ENCODE measurements at regions of chr12 and their contacts with region 1.

Region 1: GRCh38 chr12:5988659-5989116 is 43.6 kb upstream of the ANO2 start:
- DNase-seq: peak; percentile 50 to 86
- H3K4me3 ChIP-seq: no peak overlapping the region
- H3K27ac ChIP-seq: no peak overlapping the region
- H3K4me1 ChIP-seq: no peaks in the 10 kb centered on the region
- H3K27me3 ChIP-seq: peaks cover 35% of the 10 kb centered on the region
- CTCF ChIP-seq: peak; percentile 99

Region 2: GRCh38 chr12:6020926-6021325 is 32.2 kb after region 1 on chr12:
- CTCF ChIA-PET with region 1: no interaction called
- POLR2A ChIA-PET with region 1: no interaction called
- intact Hi-C with region 1: no loop called
- DNase-seq: no peak
- H3K4me3 ChIP-seq: no peak overlapping the region
- H3K27ac ChIP-seq: no peak overlapping the region
- H3K4me1 ChIP-seq: peaks cover 8% of the 10 kb centered on the region
- H3K27me3 ChIP-seq: 0 out of 2 replicates have a peak, but pooled peaks cover 3% of the 10 kb centered on the region
- CTCF ChIP-seq: no peak

Region 3: GRCh38 chr12:6039894-6040568 is 51.3 kb after region 1 on chr12:
- CTCF ChIA-PET with region 1: interaction called, 82 read pairs
- POLR2A ChIA-PET with region 1: interaction called, 3 read pairs
- intact Hi-C with region 1: loop called (anchors 1 kb)
- DNase-seq: peak; percentile 44 to 65
- H3K4me3 ChIP-seq: no peak overlapping the region
- H3K27ac ChIP-seq: no peak overlapping the region
- H3K4me1 ChIP-seq: peaks cover 11% of the 10 kb centered on the region
- H3K27me3 ChIP-seq: no peaks in the 10 kb centered on the region
- CTCF ChIP-seq: peak; percentile 98

Region 4: GRCh38 chr12:6135071-6135470 is 146.4 kb after region 1 on chr12:
- CTCF ChIA-PET with region 1: no interaction called
- POLR2A ChIA-PET with region 1: interaction called, 29 read pairs
- intact Hi-C with region 1: no loop called
- DNase-seq: no peak
- H3K4me3 ChIP-seq: no peak overlapping the region
- H3K27ac ChIP-seq: no peak overlapping the region
- H3K4me1 ChIP-seq: no peaks in the 10 kb centered on the region
- H3K27me3 ChIP-seq: no peaks in the 10 kb centered on the region
- CTCF ChIP-seq: no peak

Region 5: DNA sequence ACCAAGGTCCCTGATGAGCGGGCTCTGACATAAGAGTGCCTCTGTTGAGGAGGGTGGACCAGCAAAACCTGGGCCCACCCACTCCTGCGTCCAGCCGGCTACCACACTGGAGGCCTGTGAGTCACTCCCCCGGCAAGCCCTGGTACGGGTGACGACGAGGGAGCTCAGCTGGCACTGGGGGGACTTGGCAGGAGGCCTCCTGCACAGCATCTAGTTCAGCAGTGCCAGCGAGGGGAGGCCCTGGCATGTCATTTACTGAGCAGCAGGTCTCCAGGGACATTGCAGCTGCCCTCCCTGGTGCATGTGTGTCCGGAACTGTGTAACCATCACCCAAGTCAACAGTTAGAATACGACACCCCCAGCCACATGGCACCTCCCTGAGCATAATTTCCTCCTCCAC is 235.9 kb after region 1 on chr12:
- CTCF ChIA-PET with region 1: interaction called, 11 read pairs
- POLR2A ChIA-PET with region 1: no interaction called
- intact Hi-C with region 1: no loop called
- DNase-seq: peak in 1 of 2 experiments; percentile 42
- H3K4me3 ChIP-seq: no peak overlapping the region
- H3K27ac ChIP-seq: no peak overlapping the region
- H3K4me1 ChIP-seq: peaks cover 88% of the 10 kb centered on the region
- H3K27me3 ChIP-seq: no peaks in the 10 kb centered on the region
- CTCF ChIP-seq: no peak

Region 6: DNA sequence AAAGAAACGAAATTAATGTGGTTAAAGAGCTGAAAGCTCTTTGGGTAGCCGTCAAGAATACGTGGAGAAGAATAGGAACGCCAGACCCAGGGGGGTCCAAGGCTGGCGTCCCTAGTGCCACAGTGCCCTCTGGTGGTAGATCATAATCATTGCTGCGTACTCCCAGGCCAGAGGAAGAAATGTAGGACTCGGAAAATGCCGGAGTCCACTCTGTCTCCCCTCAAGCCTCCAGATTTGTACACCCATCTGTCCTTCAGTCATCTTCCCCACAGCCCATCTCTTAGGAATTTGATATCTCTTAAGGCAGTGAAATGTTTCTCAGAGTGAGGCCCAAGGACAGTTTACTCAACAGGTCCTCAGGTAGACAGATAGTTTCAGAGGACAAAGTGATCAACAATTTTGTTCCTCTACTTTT is 296.4 kb after region 1 on chr12:
- CTCF ChIA-PET with region 1: interaction called, 12 read pairs
- POLR2A ChIA-PET with region 1: no interaction called
- intact Hi-C with region 1: loop called (anchors 1 kb)
- DNase-seq: peak; percentile 48 to 79
- H3K4me3 ChIP-seq: no peak overlapping the region
- H3K27ac ChIP-seq: no peak overlapping the region
- H3K4me1 ChIP-seq: peaks cover 40% of the 10 kb centered on the region
- H3K27me3 ChIP-seq: no peaks in the 10 kb centered on the region
- CTCF ChIP-seq: peak; percentile 99

Region 7: DNA sequence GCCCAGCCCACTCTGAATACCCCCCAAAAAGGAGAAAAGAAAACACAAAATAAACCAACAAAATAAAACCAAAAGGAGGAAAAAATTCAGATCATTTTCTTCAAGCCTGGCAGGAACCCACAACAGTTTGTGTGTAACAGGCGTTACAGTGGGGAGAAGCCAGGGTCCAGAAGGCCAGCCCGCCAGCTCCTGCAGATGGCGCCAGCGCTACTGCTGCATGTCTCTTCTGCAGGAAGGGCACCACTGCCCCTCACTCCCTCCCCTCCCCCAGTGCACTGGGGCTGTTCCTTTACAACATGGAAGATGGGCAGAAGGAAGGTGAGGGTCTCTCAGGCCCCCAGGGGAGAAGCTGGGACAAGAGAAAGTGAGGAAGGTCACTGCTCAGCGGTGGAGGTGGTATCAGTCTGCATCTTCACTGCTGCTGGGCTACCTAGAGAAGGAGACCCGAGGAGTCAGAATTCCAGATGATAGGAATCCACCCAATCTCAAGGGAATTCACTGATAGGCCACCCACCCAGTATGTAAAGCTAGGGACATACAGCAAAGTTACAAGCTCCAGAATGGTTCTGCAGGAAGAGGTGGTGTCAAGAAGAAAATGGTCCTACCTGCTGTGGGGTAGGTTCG is 581.7 kb after region 1 on chr12:
- CTCF ChIA-PET with region 1: interaction called, 5 read pairs
- POLR2A ChIA-PET with region 1: no interaction called
- intact Hi-C with region 1: loop called (anchors 5 kb)
- DNase-seq: peak; percentile 35 to 62
- H3K4me3 ChIP-seq: no peak overlapping the region
- H3K27ac ChIP-seq: no peak overlapping the region
- H3K4me1 ChIP-seq: peaks cover 16% of the 10 kb centered on the region
- H3K27me3 ChIP-seq: no peaks in the 10 kb centered on the region
- CTCF ChIP-seq: peak; percentile 58; the same call in 1 of the 2 replicates

Region 8: DNA sequence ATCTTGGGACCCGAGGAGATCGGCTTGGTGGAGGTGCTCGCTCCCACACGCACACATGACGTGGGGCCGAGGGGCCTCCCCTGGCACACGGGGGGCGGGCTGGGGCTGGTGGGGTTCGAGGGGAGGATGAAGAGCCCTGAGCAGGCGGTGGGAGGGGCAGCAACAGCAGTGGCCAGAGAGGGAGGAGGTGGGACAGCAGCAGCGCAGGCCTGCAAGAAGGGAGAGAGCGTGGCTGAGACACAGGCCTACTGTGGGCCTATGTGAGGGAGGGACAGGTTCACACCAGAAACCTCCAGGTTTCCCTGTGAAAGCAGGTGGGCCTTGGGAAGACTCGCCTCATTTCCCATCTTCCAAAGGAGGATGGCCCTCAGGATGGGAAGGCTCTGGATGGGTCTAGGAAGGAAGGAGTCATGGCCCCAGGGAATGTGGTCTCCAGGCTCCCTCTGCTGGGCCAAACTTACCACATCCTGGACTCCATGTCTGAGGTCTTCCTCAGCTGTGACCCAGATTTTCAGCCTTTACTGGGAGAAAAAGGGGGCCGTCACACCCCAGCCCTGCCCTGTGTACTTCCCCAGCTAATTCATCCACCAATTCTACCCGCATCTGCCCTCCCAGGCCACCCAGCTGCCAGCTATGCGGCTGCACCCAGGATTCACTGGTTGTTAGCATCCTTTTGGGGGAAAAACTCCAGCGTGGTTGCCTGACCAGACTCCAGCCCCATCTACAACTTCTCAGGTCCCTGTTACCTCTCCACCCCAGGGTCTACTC is 709.1 kb after region 1 on chr12:
- CTCF ChIA-PET with region 1: no interaction called
- POLR2A ChIA-PET with region 1: no interaction called
- intact Hi-C with region 1: loop called (anchors 10 kb)
- DNase-seq: peak; percentile 43 to 68
- H3K4me3 ChIP-seq: no peak overlapping the region
- H3K27ac ChIP-seq: no peak overlapping the region
- H3K4me1 ChIP-seq: no peaks in the 10 kb centered on the region
- H3K27me3 ChIP-seq: peaks cover 43% of the 10 kb centered on the region
- CTCF ChIP-seq: peak; percentile 74

Region 9: GRCh38 chr12:6890789-6891645 is 902.3 kb after region 1 on chr12:
- CTCF ChIA-PET with region 1: no interaction called
- POLR2A ChIA-PET with region 1: no interaction called
- intact Hi-C with region 1: no loop called
- DNase-seq: peak; percentile 89 to 100
- H3K4me3 ChIP-seq: peak overlapping the region; percentile 57
- H3K27ac ChIP-seq: peak overlapping the region; percentile 90
- H3K4me1 ChIP-seq: peaks cover 15% of the 10 kb centered on the region
- H3K27me3 ChIP-seq: no peaks in the 10 kb centered on the region
- CTCF ChIP-seq: peak; percentile 74